Activated CD4-positive, alpha-beta T cell treated with anti-CD3 and anti-CD28 coated beads, Interleukin-2, amount 10 ng/mL, durations not matched to agents 24 days and 14 days (primary cell): ENCODE measurements at regions of chr4 and their contacts with region 1.

Region 1: DNA sequence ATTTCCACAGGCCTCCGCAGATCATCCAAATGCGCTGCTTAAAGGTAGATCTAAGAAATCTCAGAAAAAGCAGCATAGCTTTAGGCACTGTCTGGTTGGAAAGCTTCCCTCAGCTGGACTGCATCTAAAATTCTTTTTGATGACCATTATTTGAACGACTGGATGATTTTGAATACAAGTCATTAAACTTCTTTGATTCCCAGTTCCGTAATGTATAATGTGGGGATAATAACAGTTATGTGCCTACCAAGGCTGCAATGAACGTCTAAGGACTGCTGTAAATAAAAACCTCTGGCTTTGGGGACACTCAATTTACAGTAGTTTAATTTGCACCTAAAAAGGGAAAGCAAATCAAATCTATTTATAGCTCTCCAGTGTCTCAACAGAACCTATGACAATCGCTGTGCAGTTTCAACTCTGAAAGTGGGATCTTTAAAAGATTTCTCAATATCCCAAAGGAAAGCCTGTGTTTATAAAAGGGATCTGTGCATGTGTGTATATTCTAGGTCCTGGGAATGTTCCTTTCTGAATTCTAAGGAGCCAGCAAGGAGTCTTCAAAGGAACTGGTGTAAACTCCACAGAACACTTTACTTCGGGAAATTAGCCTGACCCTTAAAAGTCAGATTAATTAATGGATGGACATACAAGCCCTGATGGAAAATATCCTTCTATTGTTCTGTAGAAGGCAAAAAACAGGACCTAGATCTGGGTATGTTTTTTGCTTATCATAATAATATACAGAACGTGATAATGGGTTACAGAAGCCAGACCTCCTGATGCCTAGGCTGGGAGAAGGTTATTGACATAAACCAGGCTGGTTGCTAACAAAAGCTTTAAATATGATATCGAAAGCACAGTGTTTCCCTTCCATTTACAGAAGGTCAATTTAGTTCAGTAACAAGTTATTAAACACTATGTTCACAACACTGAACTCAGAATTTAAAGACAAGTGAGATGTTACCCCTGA is 53.4 kb downstream of the AFAP1 start:
- DNase-seq: no peak
- H3K4me3 Mint-ChIP-seq: no peak overlapping the region
- H3K27ac Mint-ChIP-seq: no peak overlapping the region
- H3K4me1 Mint-ChIP-seq: peaks cover 6% of the 10 kb centered on the region
- H3K27me3 Mint-ChIP-seq: no peaks in the 10 kb centered on the region

Region 2: DNA sequence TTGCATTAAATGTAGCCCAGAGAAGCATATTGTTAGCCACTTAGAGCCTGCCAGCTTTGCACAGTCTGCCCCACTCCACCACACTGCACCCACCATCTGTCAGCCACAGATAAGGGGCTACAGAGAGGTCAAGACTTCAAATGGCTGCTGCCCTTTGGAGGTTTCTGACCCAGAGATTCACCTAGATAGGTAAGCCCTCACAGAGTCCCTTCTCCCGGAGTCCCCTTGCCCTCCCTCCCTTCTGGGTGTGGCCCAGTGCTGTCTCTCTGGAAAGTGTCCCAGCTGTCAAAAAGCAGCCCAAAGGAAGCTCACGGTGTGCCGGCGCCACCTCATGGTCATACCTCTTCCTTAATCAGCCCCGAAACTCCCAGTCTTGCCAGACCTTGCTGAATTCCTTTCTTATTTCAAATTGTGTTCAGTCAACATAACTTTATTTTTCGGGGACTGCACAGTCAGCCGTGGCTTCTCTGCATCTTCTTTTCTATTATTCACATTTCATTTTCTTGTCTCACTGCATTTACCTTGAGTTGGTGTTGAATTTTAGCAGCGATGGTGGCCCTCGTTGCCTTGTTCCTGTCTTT is 804.3 kb before region 1 on chr4:
- intact Hi-C with region 1: no loop called
- DNase-seq: peak; percentile 82
- H3K4me3 Mint-ChIP-seq: no peak overlapping the region
- H3K27ac Mint-ChIP-seq: no peak overlapping the region
- H3K4me1 Mint-ChIP-seq: peaks cover 9% of the 10 kb centered on the region
- H3K27me3 Mint-ChIP-seq: peaks cover 55% of the 10 kb centered on the region

Region 3: DNA sequence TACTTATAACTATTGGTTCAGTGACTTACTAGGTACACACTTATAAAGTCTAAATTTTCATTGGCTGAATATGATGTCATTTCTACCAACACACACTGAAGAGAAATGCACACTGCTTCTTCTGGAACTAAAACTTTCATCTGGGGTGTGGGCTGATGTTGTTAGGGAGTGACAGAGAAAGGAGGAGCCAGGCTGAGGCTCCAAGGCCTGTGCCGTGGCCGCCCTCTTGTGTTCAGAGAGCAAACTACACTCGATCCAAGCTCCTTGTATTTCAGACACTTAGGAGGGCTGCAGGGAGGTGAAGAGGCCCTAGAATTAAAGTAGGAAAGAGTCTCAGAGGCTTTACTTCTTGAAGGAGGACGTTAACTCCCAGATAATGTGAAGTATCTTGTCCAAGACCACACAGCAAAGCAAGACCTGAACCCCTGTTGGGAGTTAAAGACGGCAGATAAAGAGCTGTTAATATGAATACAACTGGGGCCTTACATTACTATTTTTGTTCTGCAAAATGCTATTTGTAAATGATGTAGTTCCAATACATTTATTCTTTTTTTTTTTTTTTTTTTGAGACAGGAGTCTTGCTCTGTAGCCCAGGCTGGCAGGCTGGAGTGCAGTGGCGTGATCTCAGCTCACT is 84.1 kb before region 1 on chr4:
- intact Hi-C with region 1: no loop called
- DNase-seq: peak; percentile 94
- H3K4me3 Mint-ChIP-seq: no peak overlapping the region
- H3K27ac Mint-ChIP-seq: no peak overlapping the region
- H3K4me1 Mint-ChIP-seq: peaks cover 12% of the 10 kb centered on the region
- H3K27me3 Mint-ChIP-seq: no peaks in the 10 kb centered on the region

Region 4: GRCh38 chr4:7867701-7868435 is 18.4 kb before region 1 on chr4:
- intact Hi-C with region 1: loop called (anchors 2 kb)
- DNase-seq: no peak
- H3K4me3 Mint-ChIP-seq: peak overlapping the region; percentile 24
- H3K27ac Mint-ChIP-seq: peak overlapping the region; percentile 77
- H3K4me1 Mint-ChIP-seq: peaks cover 27% of the 10 kb centered on the region
- H3K27me3 Mint-ChIP-seq: no peaks in the 10 kb centered on the region